Activated naive CD4-positive, alpha-beta T cell treated with anti-CD3 and anti-CD28 coated beads, Interleukin-2, amount 10 ng/mL, durations not matched to agents 7 days and 5 days (primary cell): ENCODE measurements at regions of chr12 and their contacts with region 1.

Region 1: DNA sequence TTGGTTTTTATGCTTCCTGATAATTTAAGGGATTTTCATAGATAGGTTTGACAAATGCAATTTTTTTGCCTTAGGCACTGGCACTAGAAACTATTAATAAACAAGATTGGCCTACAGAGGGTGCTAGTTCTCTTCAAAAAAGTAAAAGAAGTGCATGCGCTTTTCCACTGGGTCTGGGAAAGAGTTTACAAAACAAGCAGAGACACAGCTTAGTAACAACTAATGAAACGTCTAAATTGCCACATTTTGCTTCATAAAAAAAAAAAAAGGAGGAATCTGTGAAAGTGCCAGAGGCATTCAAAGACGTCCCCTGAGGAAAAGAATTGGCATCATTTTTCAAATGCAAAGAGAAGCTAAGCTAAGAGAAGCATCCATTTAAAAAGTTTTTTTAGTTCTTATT is 58.3 kb upstream of the EEA1 start:
- DNase-seq: no peak
- H3K4me3 Mint-ChIP-seq: no peak overlapping the region
- H3K27ac Mint-ChIP-seq: no peak overlapping the region
- H3K4me1 Mint-ChIP-seq: peaks cover 14% of the 10 kb centered on the region
- H3K27me3 Mint-ChIP-seq: peaks cover 9% of the 10 kb centered on the region

Region 2: DNA sequence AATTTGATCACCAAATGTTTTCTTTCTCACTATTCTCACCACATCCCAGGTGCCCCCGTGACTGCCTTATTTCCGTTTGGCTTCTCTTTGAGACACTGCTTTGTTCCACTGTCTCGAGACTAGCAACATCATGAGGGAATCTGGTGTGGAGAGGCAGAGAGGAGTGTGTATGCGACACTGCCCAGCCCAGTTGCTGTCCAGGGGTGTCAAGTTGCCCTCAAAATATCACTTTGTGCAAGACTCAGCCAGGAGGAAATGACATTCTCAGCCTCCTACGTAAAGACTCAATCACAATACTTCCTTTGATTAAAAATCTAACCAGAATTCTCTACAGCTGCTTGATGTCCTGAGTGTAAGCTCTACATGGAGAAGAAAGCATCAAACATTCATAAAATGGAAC is 10.0 kb before region 1 on chr12:
- CTCF ChIA-PET with region 1: interaction called, 20 read pairs
- DNase-seq: peak; percentile 40
- H3K4me3 Mint-ChIP-seq: no peak overlapping the region
- H3K27ac Mint-ChIP-seq: no peak overlapping the region
- H3K4me1 Mint-ChIP-seq: peaks cover 17% of the 10 kb centered on the region
- H3K27me3 Mint-ChIP-seq: no peaks in the 10 kb centered on the region

Region 3: DNA sequence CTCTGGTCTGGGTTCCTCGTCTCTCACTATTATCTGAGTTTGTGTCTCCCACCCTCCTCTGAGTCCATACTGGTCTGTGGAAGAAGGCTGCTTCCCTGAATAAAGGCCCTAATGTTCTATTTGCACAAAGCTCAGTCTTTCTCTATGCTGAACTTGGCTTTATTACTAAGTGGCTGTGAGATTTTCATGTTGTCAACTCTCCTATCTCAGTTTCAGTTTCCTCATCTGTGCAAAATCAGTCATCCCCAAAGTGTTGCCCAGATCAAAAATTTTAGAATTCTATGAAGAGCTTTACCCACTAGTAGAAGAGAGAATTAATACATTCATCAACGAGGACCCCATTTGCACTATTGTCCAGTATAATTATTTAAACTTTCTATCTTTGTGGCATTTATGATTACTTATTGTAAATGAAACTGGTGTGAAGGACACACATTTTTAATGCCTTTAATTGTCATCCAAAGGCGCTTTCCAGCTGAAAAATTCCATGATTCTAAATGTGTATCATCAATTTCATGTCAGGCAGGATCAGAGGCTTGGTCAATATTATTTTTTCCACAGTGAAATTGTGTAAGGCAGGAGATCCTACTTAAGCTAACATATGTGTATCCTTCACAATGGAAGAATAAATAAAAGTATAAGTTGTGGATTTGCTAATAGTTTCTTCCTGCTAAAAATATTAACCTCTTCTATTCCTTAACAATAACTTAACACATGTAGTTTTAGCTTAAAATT is 20.8 kb after region 1 on chr12:
- CTCF ChIA-PET with region 1: interaction called, 27 read pairs
- DNase-seq: no peak
- H3K4me3 Mint-ChIP-seq: no peak overlapping the region
- H3K27ac Mint-ChIP-seq: no peak overlapping the region
- H3K4me1 Mint-ChIP-seq: no peaks in the 10 kb centered on the region
- H3K27me3 Mint-ChIP-seq: no peaks in the 10 kb centered on the region

Region 4: DNA sequence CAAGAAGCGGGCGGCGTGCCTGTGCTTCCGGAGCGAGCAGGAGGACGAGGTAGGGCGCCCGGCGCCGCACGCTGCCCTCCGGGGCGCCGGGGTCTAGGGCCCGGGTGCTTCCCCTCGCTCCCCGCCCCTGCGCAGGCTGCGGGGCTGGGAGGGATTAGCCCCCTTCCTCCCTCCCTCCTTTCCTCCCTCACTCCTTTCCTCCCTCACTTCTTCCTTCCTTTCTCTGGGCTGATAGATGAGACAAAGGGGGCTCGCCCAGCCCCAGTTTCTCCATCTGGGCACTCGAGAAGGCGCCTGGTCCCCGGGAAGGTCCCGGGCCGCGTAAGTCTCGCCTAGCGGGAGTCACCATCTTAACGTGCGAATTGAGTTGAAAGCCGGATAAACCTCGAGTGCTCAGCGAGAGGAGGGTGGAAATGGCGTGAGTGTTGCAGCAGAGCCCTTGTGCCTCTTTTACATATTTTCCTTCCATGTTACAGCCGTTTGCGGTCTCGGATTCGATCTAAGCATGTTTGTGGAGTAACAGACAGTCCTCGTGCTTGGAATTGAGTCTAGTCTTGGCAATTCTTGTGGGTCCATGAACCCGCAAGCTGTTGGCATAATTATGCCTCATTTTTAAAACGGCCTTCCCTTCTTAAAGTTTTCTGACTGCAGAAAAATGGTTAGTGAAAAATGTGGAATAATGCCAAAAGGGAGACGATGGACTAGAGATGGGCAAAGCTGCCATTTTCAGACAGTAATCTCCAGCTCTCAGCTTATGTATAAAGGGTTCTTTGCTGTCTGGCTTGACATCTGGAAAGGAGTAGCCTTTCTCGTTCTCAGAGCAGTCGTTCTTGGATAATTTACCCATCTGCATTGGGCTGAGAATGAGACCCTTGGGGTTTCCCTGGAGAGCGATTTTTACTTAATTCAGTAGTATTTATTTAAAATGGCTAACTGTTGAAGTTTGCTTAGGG is 391.3 kb after region 1 on chr12:
- CTCF ChIA-PET with region 1: interaction called, 43 read pairs
- DNase-seq: peak; percentile 75
- H3K4me3 Mint-ChIP-seq: peak overlapping the region; percentile 100
- H3K27ac Mint-ChIP-seq: peak overlapping the region; percentile 100
- H3K4me1 Mint-ChIP-seq: peaks cover 45% of the 10 kb centered on the region
- H3K27me3 Mint-ChIP-seq: no peaks in the 10 kb centered on the region

Region 5: GRCh38 chr12:93408813-93409212 is 421.5 kb after region 1 on chr12:
- CTCF ChIA-PET with region 1: interaction called, 18 read pairs
- DNase-seq: no peak
- H3K4me3 Mint-ChIP-seq: no peak overlapping the region
- H3K27ac Mint-ChIP-seq: no peak overlapping the region
- H3K4me1 Mint-ChIP-seq: peaks cover 32% of the 10 kb centered on the region
- H3K27me3 Mint-ChIP-seq: no peaks in the 10 kb centered on the region